ENCODE measurements at regions of chr19 and their contacts with region 1.

Region 1: GRCh38 chr19:13104360-13104847 is 1.7 kb upstream of the LYL1 start:
- DNase-seq: peak; percentile 50
- ATAC-seq: peak; percentile 17
- H3K4me3 ChIP-seq: peak overlapping the region; percentile 57
- H3K27ac ChIP-seq: no peak overlapping the region
- H3K4me1 ChIP-seq: peaks cover 10% of the 10 kb centered on the region; the same call in 1 of the 2 replicates
- H3K27me3 ChIP-seq: no peaks in the 10 kb centered on the region
- CTCF ChIP-seq: peak; percentile 94

Region 2: DNA sequence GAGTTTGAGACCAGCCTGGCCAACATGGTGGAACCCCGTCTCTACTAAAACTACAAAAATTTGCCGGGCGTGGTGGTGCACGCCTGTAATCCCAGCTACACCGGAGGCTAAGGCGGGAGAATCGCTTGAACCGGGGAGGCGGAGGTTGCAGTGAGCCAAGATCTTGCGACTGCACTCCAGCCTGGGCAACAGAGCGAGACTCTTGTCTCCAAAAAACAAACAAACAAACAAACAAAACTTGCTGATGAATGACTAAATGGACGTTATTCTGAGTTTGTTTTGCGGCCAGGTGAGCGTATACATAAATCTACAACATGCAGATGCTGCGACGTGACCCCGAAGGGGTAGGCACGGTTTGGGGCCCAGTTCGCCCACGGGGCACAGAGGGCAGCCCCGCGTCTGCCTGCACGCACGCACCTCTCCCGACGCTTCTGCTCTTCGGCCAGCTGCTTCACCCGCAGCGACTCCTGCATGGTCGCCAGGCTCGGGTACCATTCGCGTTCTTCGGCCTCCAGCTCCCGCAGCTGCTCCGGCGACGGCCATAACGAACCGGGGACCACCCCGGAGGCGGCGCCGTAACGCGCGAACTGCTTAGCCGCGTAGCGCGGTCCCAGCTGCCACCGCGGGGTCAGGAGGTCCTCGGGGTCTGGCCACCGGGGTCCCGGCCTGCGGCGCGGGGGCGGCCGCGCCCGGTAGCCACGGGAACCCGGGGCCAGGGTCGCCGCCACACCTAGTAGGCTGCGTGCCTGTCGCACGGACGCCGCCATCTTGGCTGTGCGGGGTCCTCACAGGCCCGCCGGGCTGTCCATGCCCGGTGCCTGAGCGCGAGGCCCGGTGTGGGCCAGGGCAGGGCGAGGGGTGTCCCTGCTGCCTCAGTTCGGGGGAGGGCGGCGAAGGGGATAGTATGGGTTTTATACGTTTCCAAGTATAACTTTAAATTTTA is 147.7 kb before region 1 on chr19 and contains the start of gene GADD45GIP1:
- CTCF ChIA-PET with region 1: interaction called, 19 read pairs
- POLR2A ChIA-PET with region 1: no interaction called
- intact Hi-C with region 1: no loop called
- DNase-seq: peak; percentile 91
- ATAC-seq: peak; percentile 82
- H3K4me3 ChIP-seq: peak within 1 kb of the TSS; percentile 73
- H3K27ac ChIP-seq: peak within 1 kb of the TSS; percentile 66
- H3K4me1 ChIP-seq: peaks cover 20% of the 10 kb centered on the region
- H3K27me3 ChIP-seq: no peaks in the 10 kb centered on the region
- CTCF ChIP-seq: no peak
- total RNA-seq, gene GADD45GIP1: 219 and 352 TPM in 2 replicates

Region 3: DNA sequence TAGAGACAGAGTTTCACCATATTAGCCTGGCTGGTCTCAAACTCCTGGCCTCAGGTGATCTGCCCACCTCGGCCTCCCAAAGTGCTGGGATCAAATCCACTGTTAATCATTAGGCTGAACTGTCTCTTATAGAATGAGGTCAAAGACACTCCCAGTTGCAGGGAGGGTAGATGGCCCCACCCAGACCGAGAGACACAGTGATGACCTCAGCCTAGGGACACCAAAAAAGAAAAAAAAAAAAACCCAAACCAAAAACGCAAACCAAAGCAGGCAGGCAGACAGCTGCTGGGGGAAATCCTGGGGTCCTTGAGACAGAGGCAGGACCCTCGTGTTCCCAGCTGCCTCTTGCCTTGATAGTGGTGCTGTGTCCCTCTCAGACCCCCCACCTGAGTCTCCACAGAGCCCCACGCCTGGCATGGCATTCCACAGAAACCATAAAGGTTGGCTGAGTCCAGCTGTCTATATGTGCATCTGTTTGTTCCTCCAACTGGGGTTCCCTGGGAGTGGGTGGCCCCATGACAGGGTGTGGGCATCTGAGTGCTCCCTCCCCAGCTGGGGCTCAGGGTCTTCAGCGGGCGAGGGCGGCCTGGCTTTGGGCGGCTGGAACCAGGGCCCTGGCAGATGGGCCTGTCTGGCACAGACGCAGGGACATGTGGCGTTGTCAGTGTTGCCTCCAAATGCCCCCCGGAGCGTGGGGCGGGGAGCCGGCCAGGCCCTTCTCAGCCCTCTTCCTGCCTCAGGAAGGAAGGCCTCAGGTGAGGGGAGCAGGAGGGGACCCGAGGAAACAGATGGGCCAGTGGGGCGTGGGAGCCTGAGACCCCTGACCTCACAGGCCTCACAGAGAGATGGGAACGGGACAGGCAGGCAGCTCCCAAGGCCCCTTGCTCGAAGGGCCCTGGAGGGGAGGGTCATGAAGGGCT is 129.8 kb before region 1 on chr19:
- CTCF ChIA-PET with region 1: interaction called, 16 read pairs
- POLR2A ChIA-PET with region 1: interaction called, 17 read pairs
- intact Hi-C with region 1: no loop called
- DNase-seq: no peak
- ATAC-seq: no peak
- H3K4me3 ChIP-seq: no peak overlapping the region
- H3K27ac ChIP-seq: no peak overlapping the region
- H3K4me1 ChIP-seq: no peaks in the 10 kb centered on the region
- H3K27me3 ChIP-seq: no peaks in the 10 kb centered on the region
- CTCF ChIP-seq: no peak

Region 4: GRCh38 chr19:13093407-13094105 is 10.8 kb before region 1 on chr19:
- CTCF ChIA-PET with region 1: interaction called, 68 read pairs
- POLR2A ChIA-PET with region 1: interaction called, 3 read pairs
- intact Hi-C with region 1: loop called (anchors 2 kb)
- DNase-seq: peak; percentile 95
- ATAC-seq: peak; percentile 74
- H3K4me3 ChIP-seq: no peak overlapping the region
- H3K27ac ChIP-seq: no peak overlapping the region
- H3K4me1 ChIP-seq: peaks cover 11% of the 10 kb centered on the region; the same call in 1 of the 2 replicates
- H3K27me3 ChIP-seq: no peaks in the 10 kb centered on the region
- CTCF ChIP-seq: peak; percentile 100

Region 5: DNA sequence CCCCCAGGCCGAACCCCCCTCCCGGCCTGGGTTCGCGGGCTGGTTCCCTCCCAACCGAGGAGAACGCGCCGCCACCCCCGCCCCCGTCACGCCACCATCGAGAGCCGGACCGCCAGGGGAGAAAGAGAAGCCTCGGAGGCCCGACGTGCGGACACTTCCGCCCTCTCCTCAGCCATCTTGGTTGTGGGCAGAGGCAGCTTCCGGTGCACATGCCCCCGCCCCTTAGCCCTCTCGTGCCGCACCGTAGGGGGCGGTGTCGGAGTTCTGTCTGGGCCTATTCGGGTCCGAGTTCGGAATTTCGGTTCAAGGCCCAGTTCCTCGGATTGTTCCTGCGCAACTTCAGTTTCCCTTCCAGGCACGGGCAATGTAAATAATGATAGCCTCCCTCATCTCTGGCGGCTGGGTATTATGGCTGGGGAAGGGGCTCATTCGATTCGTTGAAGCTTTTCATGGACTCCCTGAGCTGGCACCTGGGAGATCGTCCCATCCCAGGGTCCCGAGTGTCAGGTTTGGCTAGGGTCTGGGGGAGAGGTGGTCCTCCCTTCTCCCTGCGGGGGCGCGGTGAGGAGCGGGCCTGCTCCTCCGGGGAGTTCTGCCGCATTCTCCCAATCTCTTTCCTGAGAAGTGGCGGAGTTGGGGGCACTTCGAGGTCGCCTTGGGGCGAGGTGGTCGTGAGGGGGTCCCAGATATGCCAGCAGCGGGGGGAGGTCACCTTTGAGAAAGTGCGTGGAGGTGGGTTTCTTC is 46.0 kb after region 1 on chr19 and contains the starts of genes IER2 and STX10:
- CTCF ChIA-PET with region 1: no interaction called
- POLR2A ChIA-PET with region 1: interaction called, 6 read pairs
- intact Hi-C with region 1: loop called (anchors 5 kb)
- DNase-seq: peak; percentile 97
- ATAC-seq: peak; percentile 41
- H3K4me3 ChIP-seq: peak within 1 kb of the TSS; percentile 83
- H3K27ac ChIP-seq: peak within 1 kb of the TSS; percentile 66
- H3K4me1 ChIP-seq: peaks cover 11% of the 10 kb centered on the region; the same call in 1 of the 2 replicates
- H3K27me3 ChIP-seq: no peaks in the 10 kb centered on the region
- CTCF ChIP-seq: peak; percentile 70
- total RNA-seq, gene IER2: 155 and 191 TPM in 2 replicates
- total RNA-seq, gene STX10: 179 and 243 TPM in 2 replicates

Region 6: DNA sequence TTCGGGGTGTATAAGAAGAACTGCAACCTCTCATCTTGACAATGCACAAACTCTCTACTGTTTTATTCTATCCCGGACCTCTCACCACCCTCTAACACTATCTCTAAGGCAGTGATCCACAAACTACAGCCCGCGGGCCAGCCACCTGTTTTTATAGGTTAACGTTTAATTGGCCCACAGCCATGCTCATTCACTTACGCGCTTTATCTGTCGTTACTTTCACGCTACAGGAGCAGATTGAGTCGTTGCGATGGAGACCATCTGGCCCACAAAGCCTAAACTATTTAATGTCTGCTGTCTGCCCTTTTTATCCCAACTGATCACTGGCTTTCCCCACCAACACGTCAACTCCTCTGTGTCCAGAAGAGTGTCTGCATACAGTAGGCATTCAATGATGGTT is 243.0 kb after region 1 on chr19:
- CTCF ChIA-PET with region 1: no interaction called
- POLR2A ChIA-PET with region 1: no interaction called
- intact Hi-C with region 1: no loop called
- DNase-seq: no peak
- ATAC-seq: no peak
- H3K4me3 ChIP-seq: no peak overlapping the region
- H3K27ac ChIP-seq: no peak overlapping the region
- H3K4me1 ChIP-seq: no peaks in the 10 kb centered on the region
- H3K27me3 ChIP-seq: peaks cover 58% of the 10 kb centered on the region
- CTCF ChIP-seq: no peak

Measured in PC-3 (cell line).